ENCODE measurements at regions of chr5 and their contacts with region 1.

Region 1: GRCh38 chr5:108093186-108093585 is 288.7 kb downstream of the FBXL17 start:
- DNase-seq: peak; percentile 24 to 58
- H3K4me3 ChIP-seq: no peak overlapping the region
- H3K4me1 ChIP-seq: peaks cover 19% of the 10 kb centered on the region
- H3K27me3 ChIP-seq: no peaks in the 10 kb centered on the region

Region 2: DNA sequence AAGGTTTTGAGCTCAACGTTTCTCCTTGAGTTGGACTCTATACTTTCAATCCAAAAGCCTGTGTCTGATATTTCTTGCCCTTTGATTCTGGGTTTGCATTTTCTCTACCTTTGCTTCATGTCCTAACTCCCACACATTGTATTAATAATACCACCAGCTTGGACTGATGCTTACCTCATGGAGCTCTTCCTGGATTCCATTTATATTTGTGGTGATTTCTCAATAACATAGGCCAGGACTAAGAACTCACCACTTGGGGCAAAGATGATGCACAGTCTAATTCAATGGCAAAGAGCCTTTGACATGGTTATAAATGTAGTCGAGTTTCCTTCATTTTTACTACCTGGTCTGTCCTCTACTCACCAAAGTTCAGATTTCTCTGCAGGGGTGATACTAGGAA is 394.9 kb before region 1 on chr5:
- in situ Hi-C with region 1: loop called (anchors 25 kb)
- DNase-seq: no peak
- H3K4me3 ChIP-seq: no peak overlapping the region
- H3K4me1 ChIP-seq: peaks cover 8% of the 10 kb centered on the region
- H3K27me3 ChIP-seq: no peaks in the 10 kb centered on the region

Region 3: DNA sequence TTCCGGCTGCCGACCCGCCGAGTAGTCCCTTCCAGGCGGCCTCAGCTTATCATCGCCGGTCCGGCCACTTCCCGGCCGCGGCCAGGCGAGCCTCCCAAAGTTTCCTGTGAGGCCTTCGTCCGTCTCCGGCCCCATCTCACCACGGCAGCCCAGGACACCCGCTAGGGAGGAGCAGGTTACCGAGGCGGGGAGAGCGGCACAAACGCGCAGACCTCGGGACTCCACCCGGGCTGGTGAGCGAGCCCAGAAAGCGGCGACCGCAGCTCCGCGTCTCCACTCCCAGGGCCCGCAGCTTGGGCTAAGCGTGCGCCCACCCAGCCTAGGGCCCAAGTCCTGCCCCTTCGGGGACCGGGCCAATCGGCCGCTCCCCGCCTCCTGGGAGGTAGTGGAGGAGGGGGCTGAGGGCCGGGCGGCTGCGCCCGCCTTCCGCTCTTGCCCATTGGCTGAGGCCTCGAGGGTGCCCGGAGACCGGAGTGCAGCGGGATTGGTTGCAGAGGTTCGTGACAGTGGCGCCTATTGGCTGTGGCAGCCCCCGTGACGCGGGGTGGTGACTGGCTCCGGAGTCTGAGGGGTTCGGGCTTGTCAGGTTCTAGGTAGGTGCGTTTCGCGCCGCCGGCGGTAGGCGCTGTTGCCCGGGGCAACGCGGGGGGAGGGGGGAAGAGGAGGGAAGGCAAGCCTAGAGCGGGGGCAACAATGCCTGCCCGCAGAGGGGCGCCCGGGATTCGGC is 655.4 kb after region 1 on chr5:
- in situ Hi-C with region 1: no loop called
- DNase-seq: peak; percentile 99 to 100
- H3K4me3 ChIP-seq: peak overlapping the region; percentile 89
- H3K4me1 ChIP-seq: peaks cover 62% of the 10 kb centered on the region
- H3K27me3 ChIP-seq: no peaks in the 10 kb centered on the region

Measured in HAP-1 (cell line).